SK-N-SH (cell line): ENCODE measurements at regions of chr12 and their contacts with region 1.

Region 1: DNA sequence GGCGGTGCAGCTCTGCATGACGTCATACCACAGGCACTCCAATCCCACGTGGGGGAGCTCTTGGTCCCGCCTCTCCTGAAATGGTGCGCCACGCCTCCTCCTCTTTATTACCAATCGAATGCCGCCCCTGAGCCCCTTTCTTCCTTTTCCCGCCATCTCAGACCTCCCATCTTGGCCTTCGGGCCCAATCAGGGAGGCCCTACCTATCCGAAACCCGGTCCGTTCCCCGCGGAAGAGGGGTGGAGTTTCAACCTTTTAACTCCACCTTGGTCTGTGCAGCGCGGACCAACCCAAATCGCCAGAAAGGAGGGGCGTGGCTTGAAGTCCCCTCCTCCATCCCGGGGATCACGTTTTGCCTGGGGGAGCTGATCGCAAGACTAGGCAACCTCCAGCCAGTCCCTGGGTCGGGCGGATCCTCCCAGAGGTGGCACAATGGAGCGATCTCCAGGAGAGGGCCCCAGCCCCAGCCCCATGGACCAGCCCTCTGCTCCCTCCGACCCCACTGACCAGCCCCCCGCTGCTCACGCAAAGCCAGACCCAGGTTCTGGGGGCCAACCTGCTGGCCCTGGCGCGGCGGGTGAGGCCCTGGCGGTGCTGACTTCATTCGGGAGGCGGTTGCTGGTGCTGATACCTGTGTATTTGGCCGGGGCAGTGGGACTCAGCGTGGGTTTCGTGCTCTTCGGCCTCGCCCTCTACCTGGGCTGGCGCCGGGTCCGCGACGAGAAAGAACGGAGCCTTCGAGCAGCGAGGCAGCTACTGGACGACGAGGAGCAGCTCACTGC is at the start of gene ESYT1:
- DNase-seq: peak; percentile 94
- H3K4me3 ChIP-seq: peak within 1 kb of the TSS; percentile 67 to 89
- H3K27ac ChIP-seq: peak within 1 kb of the TSS; percentile 85 to 88
- H3K4me1 ChIP-seq: peaks cover 13 to 23% of the 10 kb centered on the region in 2 experiments
- H3K27me3 ChIP-seq: no peaks in the 10 kb centered on the region
- CTCF ChIP-seq: no peak; the same call in 1 of the 2 replicates
- EP300 ChIP-seq: no peak
- RAD21 ChIP-seq: no peak
- polyA plus RNA-seq, gene ESYT1: 132 and 143 TPM in 2 replicates

Region 2: GRCh38 chr12:56053407-56053893 is 74.6 kb before region 1 on chr12:
- CTCF ChIA-PET with region 1: no interaction called
- POLR2A ChIA-PET with region 1: no interaction called
- DNase-seq: no peak
- H3K4me3 ChIP-seq: no peak overlapping the region
- H3K27ac ChIP-seq: no peak overlapping the region
- H3K4me1 ChIP-seq: no peaks in the 10 kb centered on the region
- H3K27me3 ChIP-seq: no peaks in the 10 kb centered on the region
- CTCF ChIP-seq: no peak
- EP300 ChIP-seq: no peak
- RAD21 ChIP-seq: no peak

Region 3: GRCh38 chr12:56104109-56104814 is 23.8 kb before region 1 on chr12 and contains the start of gene PA2G4:
- CTCF ChIA-PET with region 1: interaction called, 3 read pairs
- POLR2A ChIA-PET with region 1: interaction called, 14 read pairs
- DNase-seq: peak; percentile 95
- H3K4me3 ChIP-seq: peak within 1 kb of the TSS; percentile 89 to 90
- H3K27ac ChIP-seq: peak within 1 kb of the TSS; percentile 76 to 89
- H3K4me1 ChIP-seq: peaks cover 5 to 19% of the 10 kb centered on the region in 2 experiments; a peak in 3 of 4 replicates
- H3K27me3 ChIP-seq: no peaks in the 10 kb centered on the region
- CTCF ChIP-seq: no peak
- EP300 ChIP-seq: no peak
- RAD21 ChIP-seq: no peak
- polyA plus RNA-seq, gene PA2G4: 207 and 213 TPM in 2 replicates

Region 4: DNA sequence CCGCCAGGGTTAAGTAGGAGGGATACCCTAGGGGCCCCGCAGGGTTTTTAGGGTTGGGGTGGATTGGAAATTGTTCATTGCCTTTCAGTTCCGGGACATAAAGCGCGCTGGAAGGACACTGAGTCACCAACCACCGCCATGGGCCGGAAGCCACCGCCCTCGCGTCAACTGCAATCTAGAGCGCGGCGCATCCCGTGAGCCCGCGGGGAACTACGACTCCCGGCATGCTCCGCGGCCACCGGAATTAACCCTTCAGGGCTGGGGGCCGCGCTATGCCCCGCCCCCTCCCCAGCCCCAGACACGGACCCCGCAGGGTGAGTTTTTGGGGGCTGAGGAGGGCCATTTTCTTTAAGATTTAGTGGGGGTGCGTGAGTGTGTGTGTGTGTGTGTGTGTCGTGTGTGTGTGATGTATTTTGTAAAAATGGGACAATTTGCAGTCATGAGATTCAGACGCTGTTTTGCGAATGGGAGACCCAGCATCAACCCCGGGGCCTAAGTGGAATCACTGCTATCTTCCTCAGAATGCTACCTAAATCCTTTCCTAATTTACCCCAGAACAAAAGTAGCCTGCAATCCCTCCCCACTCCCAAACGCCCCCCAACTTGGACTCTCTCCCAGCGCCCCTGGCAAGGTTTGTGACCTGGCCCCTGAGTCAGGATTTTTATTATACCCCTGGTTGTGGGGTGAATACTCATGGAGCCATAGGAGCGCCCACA is 24.4 kb after region 1 on chr12 and contains the start of gene MYL6B:
- CTCF ChIA-PET with region 1: interaction called, 11 read pairs
- POLR2A ChIA-PET with region 1: interaction called, 6 read pairs
- DNase-seq: peak; percentile 93
- H3K4me3 ChIP-seq: peak within 1 kb of the TSS; percentile 62 to 87
- H3K27ac ChIP-seq: peak within 1 kb of the TSS; percentile 85 to 86
- H3K4me1 ChIP-seq: peaks cover 23% of the 10 kb centered on the region in 2 experiments; a peak in 3 of 4 replicates
- H3K27me3 ChIP-seq: no peaks in the 10 kb centered on the region
- CTCF ChIP-seq: no peak
- EP300 ChIP-seq: no peak; a peak in 1 of 4 replicates
- RAD21 ChIP-seq: no peak
- polyA plus RNA-seq, gene MYL6B: 203 and 234 TPM in 2 replicates

Region 5: DNA sequence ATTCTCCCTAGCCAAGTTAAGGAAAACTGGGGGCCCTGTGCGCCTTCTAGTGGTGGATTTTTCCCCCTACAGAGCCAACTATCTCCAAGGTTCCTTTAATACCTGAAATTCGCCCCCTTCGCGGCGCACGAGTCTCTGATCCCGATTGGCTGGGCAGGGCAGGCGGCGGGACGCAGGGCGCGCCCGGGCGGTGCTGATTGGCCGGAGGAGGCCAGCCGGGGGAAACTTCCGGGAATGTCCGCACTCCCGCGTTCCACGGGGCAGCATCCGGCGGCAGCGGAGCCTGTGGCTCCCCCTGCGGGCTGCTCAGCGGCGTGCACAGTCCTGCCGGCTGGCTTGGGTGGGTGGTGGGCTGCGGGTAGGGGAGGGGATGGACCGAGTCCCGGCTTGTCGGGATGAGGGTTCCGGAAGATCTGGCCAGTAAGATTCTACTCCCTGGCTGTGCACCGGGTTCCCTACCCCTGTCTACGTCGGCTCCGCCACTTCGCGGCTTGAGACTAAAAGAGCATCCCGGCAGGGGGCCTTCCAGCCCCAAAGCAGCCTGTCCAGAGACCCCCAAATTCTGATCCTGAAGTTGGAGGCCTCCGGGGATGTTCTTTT is 96.1 kb after region 1 on chr12 and contains the start of gene NABP2:
- CTCF ChIA-PET with region 1: interaction called, 6 read pairs
- POLR2A ChIA-PET with region 1: interaction called, 12 read pairs
- DNase-seq: peak; percentile 98
- H3K4me3 ChIP-seq: peak within 1 kb of the TSS; percentile 67 to 97
- H3K27ac ChIP-seq: peak within 1 kb of the TSS; percentile 62 to 64
- H3K4me1 ChIP-seq: peaks cover 13 to 22% of the 10 kb centered on the region in 2 experiments; a peak in 2 of 4 replicates
- H3K27me3 ChIP-seq: no peaks in the 10 kb centered on the region
- CTCF ChIP-seq: peak; percentile 89
- EP300 ChIP-seq: no peak; a peak in 1 of 4 replicates
- RAD21 ChIP-seq: peak; percentile 56
- polyA plus RNA-seq, gene NABP2: 49.3 and 52.3 TPM in 2 replicates

Region 6: GRCh38 chr12:56851462-56851861 is 723.4 kb after region 1 on chr12:
- CTCF ChIA-PET with region 1: no interaction called
- POLR2A ChIA-PET with region 1: no interaction called
- DNase-seq: no peak
- H3K4me3 ChIP-seq: no peak overlapping the region
- H3K27ac ChIP-seq: no peak overlapping the region
- H3K4me1 ChIP-seq: no peaks in the 10 kb centered on the region
- H3K27me3 ChIP-seq: no peaks in the 10 kb centered on the region
- CTCF ChIP-seq: no peak
- EP300 ChIP-seq: no peak
- RAD21 ChIP-seq: no peak